ENCODE measurements at regions of chr3 and their contacts with region 1.

Region 1: DNA sequence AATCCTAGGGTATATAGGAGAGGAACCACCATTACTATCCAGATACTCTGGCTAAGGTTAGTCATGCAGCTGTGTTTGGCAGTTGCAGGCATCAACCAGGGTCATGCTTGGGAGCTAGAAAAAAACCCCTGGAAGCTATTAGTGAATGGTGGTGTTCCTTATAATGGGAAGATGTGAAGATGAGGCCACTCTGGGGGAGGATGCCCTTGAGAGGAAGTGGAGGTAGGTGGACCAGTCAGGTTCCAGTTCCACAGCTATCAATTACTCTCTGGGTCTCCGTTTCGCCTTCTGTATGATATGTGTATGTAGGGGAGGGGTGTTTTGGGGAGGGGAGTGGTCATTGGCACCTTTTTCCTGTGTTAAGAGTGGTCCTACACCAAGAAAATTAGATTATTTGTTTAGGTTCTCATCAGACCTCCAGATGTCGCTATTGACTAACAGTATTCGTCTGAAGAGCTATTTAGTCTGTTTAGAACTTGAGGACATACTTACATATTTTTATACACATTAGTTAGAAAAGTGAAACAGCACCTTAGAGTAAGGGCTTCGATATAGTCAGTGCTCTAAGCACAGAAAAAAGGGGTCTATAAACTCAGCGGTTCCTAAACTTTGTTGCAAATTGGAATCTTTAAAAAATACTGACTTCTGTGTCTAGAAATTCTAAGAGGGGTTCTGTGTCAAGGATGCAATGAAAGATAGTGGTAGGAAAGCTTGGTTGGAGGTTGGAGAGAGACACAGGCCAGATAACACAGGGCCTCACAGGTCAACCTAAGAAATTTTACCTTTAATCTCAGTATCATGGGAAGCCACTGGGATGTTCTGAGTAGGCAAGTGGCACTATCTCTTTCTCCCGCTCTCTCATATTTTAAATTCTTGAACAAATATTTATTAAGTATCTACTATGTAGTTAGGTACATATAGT is 9.1 kb upstream of the HPS3 start:
- DNase-seq: peak; percentile 31
- ATAC-seq: peak; percentile 89
- H3K4me3 Mint-ChIP-seq: no peak overlapping the region
- H3K27ac Mint-ChIP-seq: no peak overlapping the region
- H3K4me1 Mint-ChIP-seq: no peaks in the 10 kb centered on the region
- H3K27me3 Mint-ChIP-seq: peaks cover 7% of the 10 kb centered on the region

Region 2: DNA sequence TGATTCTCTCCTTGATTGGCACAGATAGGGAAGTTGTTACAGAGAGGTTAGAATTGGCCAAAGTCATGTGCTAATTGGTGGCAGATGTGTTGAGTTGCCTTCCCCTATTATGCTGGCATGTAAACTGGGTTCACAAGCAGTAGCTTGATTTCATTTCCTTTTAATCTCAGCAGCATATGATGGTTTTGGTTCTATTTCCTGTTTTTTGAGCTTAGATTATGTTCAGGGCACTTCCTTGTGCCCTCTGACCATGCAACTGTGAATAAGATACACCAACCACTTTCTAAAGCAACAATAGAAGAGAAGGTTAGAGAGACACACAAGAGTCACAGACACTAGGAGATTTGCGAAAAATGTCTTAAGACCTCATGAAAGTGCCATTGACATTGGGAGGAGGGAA is 25.7 kb after region 1 on chr3:
- CTCF ChIA-PET with region 1: interaction called, 13 read pairs
- POLR2A ChIA-PET with region 1: no interaction called
- DNase-seq: no peak
- ATAC-seq: peak; percentile 55
- H3K4me3 Mint-ChIP-seq: no peak overlapping the region
- H3K27ac Mint-ChIP-seq: no peak overlapping the region
- H3K4me1 Mint-ChIP-seq: peaks cover 4% of the 10 kb centered on the region
- H3K27me3 Mint-ChIP-seq: no peaks in the 10 kb centered on the region

Region 3: GRCh38 chr3:149209431-149209830 is 89.1 kb after region 1 on chr3:
- CTCF ChIA-PET with region 1: no interaction called
- POLR2A ChIA-PET with region 1: no interaction called
- DNase-seq: no peak
- ATAC-seq: no peak
- H3K4me3 Mint-ChIP-seq: no peak overlapping the region
- H3K27ac Mint-ChIP-seq: no peak overlapping the region
- H3K4me1 Mint-ChIP-seq: peaks cover 1% of the 10 kb centered on the region
- H3K27me3 Mint-ChIP-seq: peaks cover 25% of the 10 kb centered on the region

Region 4: DNA sequence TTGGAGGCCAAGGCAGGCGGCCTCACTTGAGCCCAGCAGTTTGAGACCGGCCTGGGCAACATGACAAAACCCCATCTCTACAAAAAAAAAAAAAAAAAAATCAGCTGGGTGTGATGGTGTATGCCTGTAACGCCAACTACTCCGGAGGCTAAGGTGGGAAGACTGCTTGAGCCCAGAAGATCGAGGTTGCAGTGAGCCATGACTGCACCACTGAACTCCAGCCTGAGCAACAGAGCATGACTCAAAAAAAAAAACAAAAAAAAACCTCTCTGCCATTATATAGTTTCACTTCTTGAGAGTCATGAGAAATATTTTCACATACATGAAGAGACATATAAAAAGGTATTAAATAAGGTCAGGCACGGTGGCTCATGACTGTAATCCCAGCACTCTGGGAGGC is 147.3 kb after region 1 on chr3:
- CTCF ChIA-PET with region 1: interaction called, 113 read pairs
- POLR2A ChIA-PET with region 1: no interaction called
- DNase-seq: no peak
- ATAC-seq: no peak
- H3K4me3 Mint-ChIP-seq: no peak overlapping the region
- H3K27ac Mint-ChIP-seq: no peak overlapping the region
- H3K4me1 Mint-ChIP-seq: no peaks in the 10 kb centered on the region
- H3K27me3 Mint-ChIP-seq: peaks cover 13% of the 10 kb centered on the region

Region 5: GRCh38 chr3:149280671-149281349 is 160.5 kb after region 1 on chr3:
- CTCF ChIA-PET with region 1: interaction called, 113 read pairs
- POLR2A ChIA-PET with region 1: no interaction called
- DNase-seq: no peak
- ATAC-seq: no peak
- H3K4me3 Mint-ChIP-seq: no peak overlapping the region
- H3K27ac Mint-ChIP-seq: no peak overlapping the region
- H3K4me1 Mint-ChIP-seq: peaks cover 11% of the 10 kb centered on the region
- H3K27me3 Mint-ChIP-seq: no peaks in the 10 kb centered on the region